ENCODE measurements at regions of chr7 and their contacts with region 1.

Region 1: DNA sequence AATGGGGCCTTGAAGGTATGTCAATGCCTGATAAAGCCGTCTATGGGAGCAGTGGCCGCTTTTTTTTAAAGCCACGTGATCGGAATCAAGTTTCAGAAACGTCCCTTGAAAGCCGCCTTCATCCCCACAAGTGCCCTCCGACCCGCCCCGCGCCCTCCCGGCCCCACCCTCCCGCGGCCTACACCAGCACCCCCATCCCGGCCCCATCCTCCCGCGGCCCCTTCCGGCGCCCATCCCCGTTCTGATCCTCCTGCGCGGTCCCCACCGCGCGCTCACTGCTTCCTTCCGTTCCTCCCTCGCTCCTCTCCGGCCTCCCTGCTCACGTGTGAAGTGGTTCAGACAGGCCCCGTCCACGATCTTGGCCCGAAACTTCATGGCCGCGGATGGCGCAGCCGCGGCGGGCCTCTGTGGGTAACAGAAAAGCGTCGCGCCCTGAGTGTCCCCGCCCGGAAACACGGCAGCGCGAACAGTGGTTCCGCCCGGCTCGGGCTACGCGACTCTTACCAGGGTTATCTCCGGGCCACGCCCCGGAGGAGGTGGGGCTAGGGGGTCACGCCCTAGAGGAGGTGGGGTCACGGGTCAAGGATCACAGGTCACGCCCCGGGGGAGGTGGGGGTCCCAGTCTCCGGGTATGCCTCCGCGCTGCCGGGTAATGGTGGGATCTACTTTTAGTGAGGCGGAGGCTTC is at the start of gene HUS1:
- DNase-seq: peak; percentile 98
- H3K4me3 ChIP-seq: peak within 1 kb of the TSS; percentile 56 to 79 (median 62)
- H3K27ac ChIP-seq: peak within 1 kb of the TSS; percentile 78 to 95 (median 92)
- H3K4me1 ChIP-seq: peaks cover 9 to 32% (median 18%) of the 10 kb centered on the region in 6 donors
- H3K27me3 ChIP-seq: no peaks in the 10 kb centered on the region
- CTCF ChIP-seq: peak in 2 of 11 experiments; percentile 13 to 14
- POLR2A ChIP-seq: peak; percentile 64 to 89 (median 64)
- total RNA-seq, gene HUS1: 29.5 to 74.2 (median 37.3) TPM

Region 2: GRCh38 chr7:47846117-47846836 is 133.0 kb before region 1 on chr7:
- intact Hi-C with region 1: no loop called
- DNase-seq: no peak
- H3K4me3 ChIP-seq: no peak overlapping the region
- H3K27ac ChIP-seq: no peak overlapping the region
- H3K4me1 ChIP-seq: no peaks in the 10 kb centered on the region
- H3K27me3 ChIP-seq: no peaks in the 10 kb centered on the region
- CTCF ChIP-seq: no peak
- POLR2A ChIP-seq: no peak

Region 3: DNA sequence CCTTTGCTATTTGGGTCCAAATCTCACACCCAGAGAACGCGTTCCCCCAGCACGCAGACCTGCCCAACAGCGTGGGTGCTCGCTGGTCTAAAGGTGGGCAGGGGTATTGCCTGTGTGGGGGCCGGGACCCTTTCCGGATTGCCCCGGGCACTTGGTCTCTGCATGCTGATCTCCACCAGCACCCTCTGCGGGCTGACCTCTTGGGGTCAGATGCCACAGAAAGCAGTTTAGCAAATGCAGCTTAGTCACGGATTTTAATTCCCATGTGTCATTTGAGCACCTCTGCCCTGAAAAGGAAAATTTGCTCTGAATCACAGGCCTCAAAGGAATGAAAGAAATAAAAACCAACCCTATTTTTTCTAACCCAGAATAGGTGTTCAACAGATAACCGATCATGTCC is 77.7 kb before region 1 on chr7:
- intact Hi-C with region 1: no loop called
- DNase-seq: no peak
- H3K4me3 ChIP-seq: no peak overlapping the region
- H3K27ac ChIP-seq: no peak overlapping the region
- H3K4me1 ChIP-seq: no peaks in the 10 kb centered on the region
- H3K27me3 ChIP-seq: no peaks in the 10 kb centered on the region
- CTCF ChIP-seq: no peak
- POLR2A ChIP-seq: no peak

Region 4: GRCh38 chr7:48088559-48089045 is 109.3 kb after region 1 on chr7:
- intact Hi-C with region 1: loop called (anchors 5 kb)
- DNase-seq: peak; percentile 95
- H3K4me3 ChIP-seq: peak overlapping the region; percentile 79 to 91 (median 86)
- H3K27ac ChIP-seq: peak overlapping the region; percentile 92 to 99 (median 98)
- H3K4me1 ChIP-seq: peaks cover 24 to 94% (median 74%) of the 10 kb centered on the region in 6 donors
- H3K27me3 ChIP-seq: no peaks in the 10 kb centered on the region
- CTCF ChIP-seq: no peak
- POLR2A ChIP-seq: no peak

Region 5: DNA sequence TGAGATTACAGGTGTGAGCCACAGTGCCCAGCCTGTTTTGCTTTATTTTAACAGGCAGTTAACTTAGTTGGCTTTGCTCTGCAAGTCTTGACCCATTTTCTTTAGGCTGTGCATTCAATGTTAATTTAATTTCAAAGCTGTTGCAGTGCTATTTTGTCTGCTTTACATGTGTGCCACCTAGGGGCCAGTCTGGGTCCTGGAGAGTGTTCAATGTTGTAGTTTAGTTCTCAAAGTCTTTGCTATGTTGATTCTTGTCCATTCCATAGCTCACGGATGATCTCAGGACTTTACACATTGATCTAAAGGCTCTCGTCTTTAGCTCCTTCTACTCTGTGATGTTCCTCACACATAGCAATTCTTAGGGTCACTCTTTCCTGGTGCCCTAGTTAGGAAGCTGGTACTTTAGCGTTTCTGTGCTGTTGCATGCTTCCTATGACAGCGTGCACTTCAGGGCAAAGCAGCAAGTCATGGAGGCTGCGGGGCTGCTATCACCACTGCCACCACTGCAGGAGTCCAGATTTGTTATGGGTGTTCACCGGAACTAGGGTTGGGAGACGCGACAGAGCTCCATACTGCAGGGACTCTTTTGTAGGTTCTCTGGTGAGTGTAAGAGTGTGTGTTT is 175.6 kb after region 1 on chr7:
- intact Hi-C with region 1: no loop called
- DNase-seq: no peak
- H3K4me3 ChIP-seq: no peak overlapping the region
- H3K27ac ChIP-seq: no peak overlapping the region
- H3K4me1 ChIP-seq: no peaks in the 10 kb centered on the region
- H3K27me3 ChIP-seq: no peaks in the 10 kb centered on the region
- CTCF ChIP-seq: peak in 6 of 11 experiments; percentile 11 to 43 (median 27)
- POLR2A ChIP-seq: no peak

Measured in spleen (tissue), 13 donors.